AG04449 (cell line): ENCODE measurements at regions of chr1 and their contacts with region 1.

Region 1: DNA sequence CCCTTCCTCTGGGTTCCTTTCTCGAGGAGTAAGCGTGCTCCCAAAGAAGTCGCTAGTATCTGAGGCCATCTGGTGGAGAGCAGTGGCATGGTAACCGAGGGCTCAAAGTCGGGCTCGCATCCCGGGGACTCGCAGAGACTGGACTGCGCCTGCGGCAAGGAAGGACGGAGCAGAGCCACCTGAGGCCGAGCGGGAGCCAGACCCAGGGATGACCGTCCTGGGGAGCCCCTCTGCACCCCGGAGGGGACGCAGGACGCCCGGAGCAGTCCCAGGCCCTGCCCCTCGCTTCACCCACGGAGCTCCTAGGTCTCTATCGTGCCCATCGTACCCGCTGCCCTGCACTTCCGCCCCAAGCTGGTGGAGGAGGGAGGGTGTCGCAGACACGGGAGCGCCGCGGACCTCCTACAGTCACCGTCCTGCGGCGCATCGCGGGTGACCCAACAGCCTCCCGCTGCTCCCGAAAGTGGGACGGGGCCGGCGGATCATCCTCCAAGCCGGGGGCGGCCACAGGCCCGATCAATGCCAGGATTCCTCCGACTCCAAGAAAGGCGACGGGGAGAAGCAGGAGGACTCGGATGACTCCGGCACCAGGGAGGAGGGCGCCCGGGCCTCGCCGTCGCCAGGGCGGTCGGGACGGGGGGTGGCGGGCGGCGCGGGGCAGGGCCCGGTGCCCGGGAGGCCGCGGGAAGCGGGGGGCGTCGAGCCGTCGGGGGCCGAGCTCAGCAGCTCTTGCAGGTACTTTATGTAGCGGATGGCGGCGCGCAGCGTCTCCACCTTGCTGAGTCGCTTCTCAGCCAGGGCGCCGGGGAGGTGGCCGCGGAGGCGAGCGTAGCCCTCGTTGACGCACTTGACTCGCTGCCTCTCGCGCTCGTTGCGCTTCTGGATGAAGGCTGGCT is 2.3 kb upstream of the CACNA1S start:
- DNase-seq: no peak
- H3K4me3 ChIP-seq: peak overlapping the region; percentile 67
- CTCF ChIP-seq: peak; percentile 94

Region 2: GRCh38 chr1:200979574-200980451 is 134.7 kb before region 1 on chr1:
- CTCF ChIA-PET with region 1: interaction called, 16 read pairs
- POLR2A ChIA-PET with region 1: no interaction called
- DNase-seq: no peak
- H3K4me3 ChIP-seq: no peak overlapping the region
- CTCF ChIP-seq: peak; percentile 51

Region 3: DNA sequence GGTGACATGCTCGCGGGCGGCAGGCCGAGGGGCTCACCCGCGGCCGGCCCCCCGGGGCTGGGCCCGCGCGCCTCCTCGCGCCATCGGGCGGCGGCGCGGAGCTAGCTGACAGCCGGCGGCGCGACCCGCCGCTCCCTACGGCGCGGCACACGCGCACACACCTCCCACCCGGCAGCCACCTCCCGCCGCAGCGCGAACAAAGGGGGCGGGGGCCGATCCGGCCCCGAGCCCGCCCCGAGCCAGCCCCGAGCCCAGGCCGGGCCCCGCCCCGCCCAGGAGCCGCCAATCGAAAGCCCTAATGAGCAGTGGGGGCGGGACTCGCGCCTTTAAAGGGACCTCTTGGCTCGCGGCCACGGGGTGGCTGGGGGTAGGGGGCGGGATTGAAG is 91.0 kb before region 1 on chr1 and contains the start of gene KIF21B:
- CTCF ChIA-PET with region 1: interaction called, 10 read pairs
- POLR2A ChIA-PET with region 1: no interaction called
- DNase-seq: no peak
- H3K4me3 ChIP-seq: peak within 1 kb of the TSS; percentile 64
- CTCF ChIP-seq: no peak

Region 4: GRCh38 chr1:201096035-201096434 is 18.4 kb before region 1 on chr1:
- CTCF ChIA-PET with region 1: interaction called, 18 read pairs
- POLR2A ChIA-PET with region 1: no interaction called
- DNase-seq: no peak
- H3K4me3 ChIP-seq: no peak overlapping the region
- CTCF ChIP-seq: no peak

Region 5: GRCh38 chr1:201126832-201127754 is 12.6 kb after region 1 on chr1 and contains the start of gene ASCL5:
- CTCF ChIA-PET with region 1: interaction called, 50 read pairs
- POLR2A ChIA-PET with region 1: no interaction called
- DNase-seq: no peak
- H3K4me3 ChIP-seq: no peak within 1 kb of the TSS
- CTCF ChIP-seq: no peak